GM12878 (cell line): ENCODE measurements at regions of chr5 and their contacts with region 1.

Region 1: GRCh38 chr5:157148734-157149615 is 6.3 kb upstream of the MED7 start:
- DNase-seq: peak; percentile 40
- ATAC-seq: peak; percentile 92
- H3K4me3 ChIP-seq: no peak overlapping the region
- H3K27ac ChIP-seq: no peak overlapping the region
- H3K4me1 ChIP-seq: no peaks in the 10 kb centered on the region
- H3K27me3 ChIP-seq: no peaks in the 10 kb centered on the region
- CTCF ChIP-seq: peak; percentile 73 to 91 (median 90)
- EP300 ChIP-seq: no peak
- POLR2A ChIP-seq: no peak
- RAD21 ChIP-seq: peak; percentile 99

Region 2: DNA sequence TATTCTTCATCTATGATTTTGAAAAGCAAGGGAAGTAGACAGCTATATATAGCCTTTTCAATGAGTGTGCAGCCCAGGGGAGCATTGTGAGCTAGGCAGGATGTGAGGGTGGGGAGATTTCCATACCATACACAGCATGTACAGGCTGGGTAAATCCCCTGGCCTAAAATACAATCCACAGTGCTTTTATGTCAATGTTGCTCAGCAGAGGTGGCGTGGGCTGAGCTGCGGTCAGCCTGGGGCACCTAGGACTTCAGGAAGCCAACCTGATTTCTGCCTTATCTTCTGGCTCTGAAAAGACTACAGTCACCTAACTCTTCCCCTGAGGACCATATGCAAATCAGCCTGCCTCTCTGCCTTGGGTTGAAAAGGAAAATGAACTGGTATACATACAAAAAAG is 23.4 kb after region 1 on chr5:
- CTCF ChIA-PET with region 1: interaction called, 27 read pairs
- POLR2A ChIA-PET with region 1: interaction called, 5 read pairs
- RAD21 ChIA-PET with region 1: interaction called, 30 read pairs
- SMC1A ChIA-PET with region 1: interaction called, 35 read pairs
- in situ Hi-C with region 1: no loop called
- intact Hi-C with region 1: no loop called
- DNase-seq: peak; percentile 98
- ATAC-seq: peak; percentile 98
- H3K4me3 ChIP-seq: no peak overlapping the region
- H3K27ac ChIP-seq: peak overlapping the region; percentile 93
- H3K4me1 ChIP-seq: peaks cover 14% of the 10 kb centered on the region
- H3K27me3 ChIP-seq: no peaks in the 10 kb centered on the region
- CTCF ChIP-seq: no peak
- EP300 ChIP-seq: peak; percentile 88 to 94; a peak in 3 of 4 replicates
- POLR2A ChIP-seq: no peak
- RAD21 ChIP-seq: 0 out of 2 replicates have a peak, but pooled peaks have one; percentile 30

Region 3: DNA sequence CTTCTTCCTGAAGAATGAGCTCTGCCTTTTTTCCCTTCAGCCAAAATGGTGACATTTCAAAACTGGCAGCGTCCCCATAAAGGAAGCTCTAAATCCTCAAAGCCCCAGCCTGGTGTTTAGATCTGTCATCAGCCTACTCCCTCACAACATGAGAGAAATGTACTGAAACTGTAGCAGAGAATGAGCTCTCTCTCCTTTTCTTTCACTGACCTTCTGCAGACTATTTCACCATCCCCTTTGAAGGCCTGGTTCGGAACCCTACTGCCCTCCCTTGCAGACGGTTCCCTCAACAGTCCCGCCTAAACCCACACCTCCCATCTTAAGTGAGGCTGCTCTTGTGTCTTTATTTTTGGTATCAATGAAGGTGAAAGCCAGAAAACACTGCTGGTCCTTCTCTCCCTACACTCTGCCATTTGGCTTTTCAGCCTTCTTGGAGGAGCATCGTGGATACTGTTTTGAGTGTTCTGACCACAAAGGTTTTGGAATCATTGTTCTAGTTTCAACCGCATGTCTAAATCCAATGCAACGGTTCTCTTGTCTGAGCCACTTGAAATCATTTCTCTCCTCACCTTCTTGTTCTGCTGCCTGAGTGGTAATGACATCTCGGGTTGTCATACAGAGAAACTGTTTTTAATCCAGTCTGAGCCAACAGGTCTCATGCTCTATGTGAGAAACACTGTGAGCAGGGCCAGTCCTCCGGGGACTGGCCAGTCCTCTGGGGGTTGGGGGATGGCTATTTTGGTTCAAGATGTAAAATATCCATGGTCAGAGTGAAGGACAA is 70.7 kb after region 1 on chr5:
- CTCF ChIA-PET with region 1: interaction called, 28 read pairs
- POLR2A ChIA-PET with region 1: interaction called, 5 read pairs
- RAD21 ChIA-PET with region 1: interaction called, 29 read pairs
- SMC1A ChIA-PET with region 1: interaction called, 22 read pairs
- in situ Hi-C with region 1: no loop called
- intact Hi-C with region 1: loop called (anchors 2 kb)
- DNase-seq: peak; percentile 50
- ATAC-seq: peak; percentile 75
- H3K4me3 ChIP-seq: no peak overlapping the region
- H3K27ac ChIP-seq: peak overlapping the region; percentile 54
- H3K4me1 ChIP-seq: peaks cover 53% of the 10 kb centered on the region
- H3K27me3 ChIP-seq: no peaks in the 10 kb centered on the region
- CTCF ChIP-seq: no peak
- EP300 ChIP-seq: peak; percentile 27 to 78; a peak in 2 of 4 replicates
- POLR2A ChIP-seq: no peak
- RAD21 ChIP-seq: 0 out of 2 replicates have a peak, but pooled peaks have one; percentile 12

Region 4: GRCh38 chr5:157245477-157245876 is 96.5 kb after region 1 on chr5:
- CTCF ChIA-PET with region 1: interaction called, 244 read pairs
- POLR2A ChIA-PET with region 1: no interaction called
- RAD21 ChIA-PET with region 1: interaction called, 159 read pairs
- SMC1A ChIA-PET with region 1: interaction called, 138 read pairs
- in situ Hi-C with region 1: loop called (anchors 5 kb)
- intact Hi-C with region 1: no loop called
- DNase-seq: no peak
- ATAC-seq: no peak
- H3K4me3 ChIP-seq: no peak overlapping the region
- H3K27ac ChIP-seq: no peak overlapping the region
- H3K4me1 ChIP-seq: no peaks in the 10 kb centered on the region
- H3K27me3 ChIP-seq: no peaks in the 10 kb centered on the region
- CTCF ChIP-seq: no peak
- EP300 ChIP-seq: no peak
- POLR2A ChIP-seq: no peak
- RAD21 ChIP-seq: no peak

Region 5: GRCh38 chr5:157312492-157312891 is 163.5 kb after region 1 on chr5:
- CTCF ChIA-PET with region 1: interaction called, 52 read pairs
- POLR2A ChIA-PET with region 1: no interaction called
- RAD21 ChIA-PET with region 1: interaction called, 10 read pairs
- SMC1A ChIA-PET with region 1: interaction called, 31 read pairs
- in situ Hi-C with region 1: loop called (anchors 5 kb)
- intact Hi-C with region 1: loop called (anchors 1 kb)
- DNase-seq: peak; percentile 59
- ATAC-seq: peak; percentile 96
- H3K4me3 ChIP-seq: no peak overlapping the region
- H3K27ac ChIP-seq: no peak overlapping the region
- H3K4me1 ChIP-seq: no peaks in the 10 kb centered on the region
- H3K27me3 ChIP-seq: no peaks in the 10 kb centered on the region
- CTCF ChIP-seq: peak; percentile 80 to 86 (median 80)
- EP300 ChIP-seq: no peak
- POLR2A ChIP-seq: no peak
- RAD21 ChIP-seq: peak; percentile 72